PC-9 (cell line): ENCODE measurements at regions of chr3 and their contacts with region 1.

Region 1: GRCh38 chr3:58560771-58561311 is 16.4 kb downstream of the FAM107A start:
- DNase-seq: peak; percentile 81 to 88
- H3K4me3 ChIP-seq: no peak overlapping the region
- H3K27ac ChIP-seq: no peak overlapping the region
- H3K4me1 ChIP-seq: peaks cover 17% of the 10 kb centered on the region; the same call in 1 of the 2 replicates
- H3K27me3 ChIP-seq: no peaks in the 10 kb centered on the region
- CTCF ChIP-seq: peak; percentile 69

Region 2: GRCh38 chr3:58630076-58630709 is 69.4 kb after region 1 on chr3:
- CTCF ChIA-PET with region 1: interaction called, 5 read pairs
- POLR2A ChIA-PET with region 1: no interaction called
- intact Hi-C with region 1: loop called (anchors 2 kb)
- DNase-seq: peak; percentile 40 to 61
- H3K4me3 ChIP-seq: no peak overlapping the region
- H3K27ac ChIP-seq: no peak overlapping the region
- H3K4me1 ChIP-seq: peaks cover 8% of the 10 kb centered on the region; the same call in 1 of the 2 replicates
- H3K27me3 ChIP-seq: no peaks in the 10 kb centered on the region
- CTCF ChIP-seq: peak; percentile 96

Region 3: DNA sequence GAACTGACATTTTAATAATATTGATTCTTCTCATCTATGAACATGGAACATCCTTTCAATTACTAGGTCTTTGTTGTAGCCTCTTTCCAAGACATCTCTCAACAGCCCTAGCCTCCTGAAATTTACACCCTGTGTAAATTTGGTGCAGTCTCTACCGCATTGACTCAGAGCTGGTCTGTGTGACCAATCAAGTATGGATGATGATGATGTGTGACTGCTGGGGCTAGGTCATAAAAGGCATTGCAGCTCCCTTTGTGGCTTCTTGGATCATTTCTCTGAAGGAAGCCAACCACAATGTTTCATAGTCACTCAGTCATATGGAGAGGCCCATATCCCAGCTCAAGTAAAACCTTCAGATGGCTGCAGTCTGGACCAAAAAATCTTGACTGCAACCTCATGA is 167.9 kb after region 1 on chr3:
- CTCF ChIA-PET with region 1: interaction called, 16 read pairs
- POLR2A ChIA-PET with region 1: no interaction called
- intact Hi-C with region 1: no loop called
- DNase-seq: no peak
- H3K4me3 ChIP-seq: no peak overlapping the region
- H3K27ac ChIP-seq: no peak overlapping the region
- H3K4me1 ChIP-seq: no peaks in the 10 kb centered on the region
- H3K27me3 ChIP-seq: no peaks in the 10 kb centered on the region
- CTCF ChIP-seq: no peak

Region 4: DNA sequence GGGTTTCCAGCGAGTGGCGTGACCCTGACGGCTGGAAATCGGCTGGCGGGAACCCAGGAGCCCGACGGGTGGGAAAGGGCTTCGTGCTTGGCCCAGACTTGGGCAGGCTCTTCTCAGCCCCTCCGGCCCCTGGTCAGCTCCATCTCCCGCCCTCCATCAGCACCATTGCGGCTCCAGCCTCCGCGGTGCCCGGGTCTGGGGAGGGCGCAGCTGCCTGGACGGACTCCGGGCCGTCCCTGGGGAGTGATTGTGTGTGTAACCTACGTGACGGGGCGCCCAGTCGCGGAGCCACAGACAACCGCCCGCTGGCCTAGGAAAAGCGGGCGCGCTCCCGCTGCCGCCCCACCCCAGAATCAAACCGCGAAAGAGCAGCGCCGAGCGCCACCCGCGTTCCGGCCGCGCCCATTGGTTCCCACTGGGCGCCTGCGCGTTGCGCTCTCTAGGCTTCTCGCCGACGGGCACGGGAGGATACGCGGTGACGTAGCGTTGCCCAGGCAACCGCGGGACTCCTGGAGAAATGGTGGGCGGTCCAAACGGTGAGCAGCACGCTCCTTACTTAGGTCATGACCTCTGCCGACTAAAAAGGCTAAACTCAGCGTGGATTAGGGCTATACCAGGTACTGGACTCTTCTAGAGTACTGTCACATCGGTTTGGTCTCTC is 489.0 kb after region 1 on chr3 and contains the start of gene CFAP20DC:
- CTCF ChIA-PET with region 1: no interaction called
- POLR2A ChIA-PET with region 1: no interaction called
- intact Hi-C with region 1: loop called (anchors 2 kb)
- DNase-seq: peak; percentile 81 to 92
- H3K4me3 ChIP-seq: peak within 1 kb of the TSS; percentile 74
- H3K27ac ChIP-seq: peak within 1 kb of the TSS; percentile 32
- H3K4me1 ChIP-seq: peaks cover 31% of the 10 kb centered on the region
- H3K27me3 ChIP-seq: no peaks in the 10 kb centered on the region
- CTCF ChIP-seq: no peak
- total RNA-seq, gene CFAP20DC: 6.7 and 7.1 TPM in 2 replicates

Region 5: DNA sequence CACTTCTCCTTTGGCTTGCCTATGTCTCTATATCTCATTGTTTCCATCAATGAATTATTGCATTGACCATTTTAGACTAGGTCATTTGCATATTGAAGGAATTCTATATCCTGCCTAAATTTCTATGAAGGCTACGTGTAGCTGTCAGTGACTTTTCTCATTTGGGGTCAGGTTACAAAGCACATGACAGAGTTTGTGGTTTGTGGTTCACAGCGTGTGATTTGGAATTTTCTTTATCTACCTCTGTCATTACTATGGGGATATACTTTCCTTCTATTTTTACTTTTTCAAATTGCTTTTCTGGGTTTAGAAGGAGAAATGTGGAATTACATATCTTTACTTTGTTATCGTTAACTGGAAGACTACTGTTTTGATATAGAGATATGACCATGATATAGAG is 806.3 kb after region 1 on chr3:
- CTCF ChIA-PET with region 1: no interaction called
- POLR2A ChIA-PET with region 1: no interaction called
- intact Hi-C with region 1: loop called (anchors 5 kb)
- DNase-seq: peak in 1 of 2 experiments; percentile 3
- H3K4me3 ChIP-seq: no peak overlapping the region
- H3K27ac ChIP-seq: no peak overlapping the region
- H3K4me1 ChIP-seq: peaks cover 5% of the 10 kb centered on the region; the same call in 1 of the 2 replicates
- H3K27me3 ChIP-seq: no peaks in the 10 kb centered on the region
- CTCF ChIP-seq: no peak